Cardiac septum (tissue), 1 donor: ENCODE measurements at regions of chr22 and their contacts with region 1.

Region 1: GRCh38 chr22:45863981-45864751 is 112.8 kb downstream of the WNT7B start:
- DNase-seq: peak; percentile 79

Region 2: GRCh38 chr22:45577746-45578523 is 286.2 kb before region 1 on chr22:
- intact Hi-C with region 1: loop called (anchors 5 kb)
- DNase-seq: peak; percentile 87

Region 3: DNA sequence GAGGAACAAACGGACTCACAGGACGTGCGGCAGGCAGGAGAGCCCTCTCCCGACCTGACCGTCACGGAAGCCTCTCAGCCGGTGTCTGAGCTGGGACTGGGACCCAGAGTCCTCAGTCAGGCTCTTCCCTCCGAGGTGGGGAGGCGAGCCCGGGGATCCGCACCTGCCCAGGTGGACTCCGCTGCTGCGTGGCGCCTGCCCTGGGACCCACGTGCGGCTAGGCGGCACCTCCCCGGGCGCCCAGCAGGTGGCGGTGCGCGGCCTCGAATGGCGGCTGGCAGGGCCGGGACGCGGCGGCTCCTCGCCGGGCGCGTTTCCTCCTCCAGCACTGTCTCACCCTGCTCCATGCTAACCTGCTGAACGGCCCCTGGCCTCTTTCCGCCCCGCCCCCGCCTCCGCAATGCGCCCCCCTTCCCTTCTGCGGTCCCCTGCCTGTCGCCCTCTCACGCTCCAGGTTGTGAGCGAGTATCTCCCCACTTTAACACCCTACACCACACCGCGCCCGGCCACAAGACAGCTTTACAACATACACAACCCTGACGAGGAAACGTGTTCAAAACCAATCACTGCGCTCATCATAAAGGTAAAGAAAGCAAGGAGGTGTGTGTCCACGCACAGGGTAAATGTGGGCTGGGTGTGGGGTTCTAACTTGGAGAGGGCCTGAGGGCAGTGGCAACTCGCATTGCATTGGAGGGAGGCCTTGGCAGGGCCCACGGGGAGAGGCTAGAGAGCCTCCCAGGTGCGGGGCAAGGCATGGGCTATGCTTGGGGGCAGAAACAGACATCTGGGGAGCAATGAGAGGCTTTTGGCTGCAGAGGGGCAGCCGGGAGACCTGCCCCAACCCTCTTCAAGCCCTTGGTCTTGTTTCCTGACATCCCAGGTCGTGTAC is 218.4 kb before region 1 on chr22:
- intact Hi-C with region 1: loop called (anchors 2 kb)
- DNase-seq: peak; percentile 89

Region 4: DNA sequence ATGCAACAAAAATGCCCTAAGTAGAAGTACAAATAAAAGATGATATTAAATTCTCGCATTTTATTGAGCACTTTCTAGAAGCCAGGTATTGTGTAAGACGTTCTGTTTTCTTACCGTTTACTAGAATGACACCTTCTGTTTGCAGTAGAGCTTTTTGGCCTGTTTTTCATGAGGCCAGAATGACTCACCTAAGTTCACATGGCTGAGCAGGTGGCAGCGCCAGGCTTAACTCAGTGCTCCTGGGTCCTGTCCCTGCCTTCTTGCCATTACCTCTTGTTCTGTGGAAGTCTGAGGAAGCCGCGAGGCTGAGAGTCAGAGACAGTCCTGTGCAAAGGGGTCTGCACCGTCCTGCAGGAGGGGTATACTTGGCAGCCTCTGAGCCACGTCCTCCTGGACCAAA is 78.7 kb before region 1 on chr22:
- intact Hi-C with region 1: no loop called
- DNase-seq: no peak

Region 5: DNA sequence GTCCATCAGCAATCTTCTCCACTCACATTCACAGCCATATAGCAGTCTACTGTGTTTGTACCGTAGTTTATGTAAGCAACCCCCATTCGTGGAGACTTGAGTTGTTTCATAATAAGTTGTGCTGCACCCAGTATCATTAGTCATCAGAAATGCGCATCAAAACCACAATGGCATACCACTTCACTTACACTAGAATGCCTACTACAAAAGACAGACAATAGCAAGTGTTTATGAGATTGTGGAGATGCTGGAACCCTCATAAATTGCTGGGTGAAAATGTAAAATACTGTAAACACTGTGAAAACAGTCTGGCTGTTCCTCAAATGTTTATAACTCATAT is 59.2 kb before region 1 on chr22:
- intact Hi-C with region 1: no loop called
- DNase-seq: no peak

Region 6: DNA sequence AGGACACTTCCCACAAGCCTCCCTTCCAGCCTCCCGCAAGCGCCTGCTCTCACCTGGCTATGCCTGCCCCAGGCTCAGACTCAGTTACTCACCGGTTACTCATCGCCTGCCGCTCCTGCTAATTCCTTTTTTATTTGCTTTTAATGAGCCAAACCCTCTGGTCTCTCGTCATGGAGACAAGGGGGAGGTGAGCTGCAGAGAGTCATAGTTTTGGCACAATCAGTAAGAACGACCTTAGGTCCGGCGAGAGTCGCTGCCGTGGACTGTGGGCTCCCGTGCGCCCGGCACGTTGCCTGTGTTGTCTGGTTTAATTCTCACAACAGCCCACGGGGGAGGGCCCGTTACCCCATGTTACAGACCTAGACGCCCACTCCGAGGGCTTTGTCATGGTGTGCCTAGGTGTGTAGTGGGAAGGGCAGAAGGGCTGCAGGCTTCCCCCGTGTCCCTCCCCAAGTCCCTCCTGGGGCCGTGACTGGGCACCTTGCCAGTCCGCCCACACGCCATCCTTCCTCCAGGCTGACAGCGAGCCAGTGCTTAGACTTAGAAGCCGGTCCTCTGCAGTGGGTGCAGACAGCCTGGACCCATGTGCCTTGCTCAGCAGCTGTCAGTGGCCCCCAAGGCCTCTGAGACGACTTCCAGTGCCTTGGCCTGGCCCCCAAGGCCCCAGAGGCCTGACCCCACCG is 70.6 kb after region 1 on chr22:
- intact Hi-C with region 1: no loop called
- DNase-seq: no peak

Region 7: DNA sequence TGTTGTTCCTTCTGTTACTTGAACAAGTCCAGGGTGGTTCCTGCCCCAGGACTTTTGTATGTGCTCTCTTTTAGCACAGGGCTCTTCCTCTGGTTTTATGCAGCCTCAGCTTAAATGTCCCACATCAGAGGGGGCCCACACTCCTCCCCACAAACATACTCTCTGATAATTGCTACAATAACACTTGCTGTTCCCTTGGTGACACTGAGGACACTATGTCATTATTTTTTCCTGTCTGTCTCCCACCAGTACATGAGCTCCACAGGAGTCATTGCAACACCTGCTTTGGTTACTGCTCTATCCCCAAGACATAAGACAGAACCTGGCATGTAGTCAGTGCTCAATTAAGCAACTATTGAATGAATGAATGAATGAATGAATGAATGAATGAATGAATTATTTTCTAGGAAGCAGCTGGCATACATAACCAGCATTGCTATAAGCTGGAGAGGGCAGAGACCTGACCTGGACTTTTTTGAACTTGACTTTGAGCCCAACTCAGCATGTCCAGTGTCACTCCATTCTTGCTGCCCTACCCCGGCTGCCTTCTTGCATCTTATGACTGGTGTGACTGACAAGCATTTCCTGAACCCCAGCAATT is 120.2 kb after region 1 on chr22:
- intact Hi-C with region 1: no loop called
- DNase-seq: no peak